Breast epithelium (tissue), 4 donors: ENCODE measurements at regions of chr3 and their contacts with region 1.

Region 1: DNA sequence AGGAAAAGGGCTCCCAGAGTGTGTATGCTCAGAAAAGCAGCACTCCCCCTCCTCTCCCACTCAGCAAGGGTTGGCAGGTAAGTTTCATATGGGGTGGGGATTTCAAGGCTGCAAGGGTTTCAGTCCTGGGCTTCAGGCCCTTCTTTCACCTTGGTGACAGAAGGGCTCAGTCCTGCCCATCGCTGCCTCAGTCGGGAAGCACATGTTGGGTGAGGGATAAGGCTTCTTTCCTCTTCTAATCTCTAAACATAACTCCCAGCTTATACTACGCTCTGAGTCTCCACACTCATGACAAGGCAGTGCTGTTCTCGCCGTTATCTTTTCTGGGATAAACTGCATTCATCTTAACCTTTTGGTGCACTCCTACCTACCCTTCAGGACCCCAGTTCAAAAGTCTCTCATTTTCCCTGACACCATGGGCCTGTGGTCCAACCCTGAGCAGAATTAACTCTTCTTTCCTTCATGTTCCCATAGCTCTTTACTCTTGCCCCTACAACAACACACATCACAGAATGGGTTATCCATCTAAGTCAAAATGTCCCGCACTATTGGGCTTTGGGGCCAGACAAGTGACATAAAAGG is 17.0 kb downstream of the RAB43 start:
- DNase-seq: no peak
- H3K4me3 ChIP-seq: no peak overlapping the region
- H3K27ac ChIP-seq: no peak overlapping the region
- H3K4me1 ChIP-seq: peaks cover 0 to 9% of the 10 kb centered on the region in 2 donors
- H3K27me3 ChIP-seq: no peaks in the 10 kb centered on the region
- CTCF ChIP-seq: no peak
- POLR2A ChIP-seq: no peak

Region 2: GRCh38 chr3:129139911-129140310 is 35.3 kb after region 1 on chr3:
- intact Hi-C with region 1: loop called (anchors 1 kb)
- DNase-seq: no peak
- H3K4me3 ChIP-seq: no peak overlapping the region
- H3K27ac ChIP-seq: no peak overlapping the region
- H3K4me1 ChIP-seq: no peaks in the 10 kb centered on the region
- H3K27me3 ChIP-seq: no peaks in the 10 kb centered on the region
- CTCF ChIP-seq: no peak
- POLR2A ChIP-seq: no peak